ENCODE measurements at regions of chr11 and their contacts with region 1.

Region 1: DNA sequence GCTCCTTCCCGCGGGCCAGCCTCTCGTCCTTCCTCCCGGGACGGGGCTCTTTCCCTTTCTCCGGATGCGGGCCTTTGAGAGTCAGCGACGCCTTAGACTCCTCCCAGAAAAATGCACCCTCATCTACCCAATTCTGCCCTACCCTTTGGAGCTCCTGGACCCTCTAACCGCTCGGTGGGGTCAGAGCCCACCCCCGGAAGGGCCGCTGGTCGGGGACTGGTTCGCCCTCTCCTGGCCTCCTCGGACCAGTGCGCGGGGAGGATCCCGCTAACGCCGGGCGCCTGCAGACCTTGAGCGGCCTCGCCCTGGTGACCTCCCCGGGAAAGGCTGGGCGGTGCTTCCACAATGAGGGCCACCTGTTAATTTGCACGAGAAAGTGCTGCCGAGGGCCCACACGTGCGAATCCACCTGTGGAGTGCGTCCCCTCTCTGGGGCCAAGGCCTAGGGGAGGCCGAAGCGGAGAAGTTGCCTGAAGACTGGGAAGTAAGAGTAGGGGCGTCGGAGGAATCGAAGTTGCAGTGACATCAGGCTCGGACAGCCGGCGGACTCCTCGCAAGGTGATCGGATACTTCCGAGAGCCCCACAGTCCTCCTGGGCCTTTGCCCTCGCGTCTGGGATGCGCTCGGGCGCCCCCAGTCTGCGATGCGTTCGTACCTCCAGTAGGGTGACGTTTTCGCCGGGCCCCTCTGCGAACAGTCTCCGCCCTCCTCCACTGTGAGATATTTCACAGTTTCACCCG is 61.5 kb downstream of the ENDOD1 start:
- DNase-seq: peak; percentile 77
- ATAC-seq: peak; percentile 89
- H3K4me3 ChIP-seq: peak overlapping the region; percentile 80
- H3K27ac ChIP-seq: peak overlapping the region; percentile 56
- H3K4me1 ChIP-seq: peaks cover 2% of the 10 kb centered on the region; the same call in 1 of the 2 replicates
- H3K27me3 ChIP-seq: no peaks in the 10 kb centered on the region
- CTCF ChIP-seq: peak; percentile 79 to 97 (median 87)
- EP300 ChIP-seq: no peak
- POLR2A ChIP-seq: peak; percentile 75
- RAD21 ChIP-seq: peak; percentile 38; the same call in 1 of the 2 replicates

Region 2: GRCh38 chr11:94472916-94473799 is 678.0 kb before region 1 on chr11:
- CTCF ChIA-PET with region 1: no interaction called
- POLR2A ChIA-PET with region 1: no interaction called
- RAD21 ChIA-PET with region 1: no interaction called
- SMC1A ChIA-PET with region 1: no interaction called
- in situ Hi-C with region 1: no loop called
- intact Hi-C with region 1: no loop called
- DNase-seq: peak; percentile 88
- ATAC-seq: peak; percentile 82
- H3K4me3 ChIP-seq: peak overlapping the region; percentile 11; the same call in 1 of the 2 replicates
- H3K27ac ChIP-seq: peak overlapping the region; percentile 69
- H3K4me1 ChIP-seq: peaks cover 48% of the 10 kb centered on the region
- H3K27me3 ChIP-seq: no peaks in the 10 kb centered on the region
- CTCF ChIP-seq: no peak
- EP300 ChIP-seq: peak; percentile 96 to 97
- POLR2A ChIP-seq: no peak
- RAD21 ChIP-seq: no peak

Region 3: DNA sequence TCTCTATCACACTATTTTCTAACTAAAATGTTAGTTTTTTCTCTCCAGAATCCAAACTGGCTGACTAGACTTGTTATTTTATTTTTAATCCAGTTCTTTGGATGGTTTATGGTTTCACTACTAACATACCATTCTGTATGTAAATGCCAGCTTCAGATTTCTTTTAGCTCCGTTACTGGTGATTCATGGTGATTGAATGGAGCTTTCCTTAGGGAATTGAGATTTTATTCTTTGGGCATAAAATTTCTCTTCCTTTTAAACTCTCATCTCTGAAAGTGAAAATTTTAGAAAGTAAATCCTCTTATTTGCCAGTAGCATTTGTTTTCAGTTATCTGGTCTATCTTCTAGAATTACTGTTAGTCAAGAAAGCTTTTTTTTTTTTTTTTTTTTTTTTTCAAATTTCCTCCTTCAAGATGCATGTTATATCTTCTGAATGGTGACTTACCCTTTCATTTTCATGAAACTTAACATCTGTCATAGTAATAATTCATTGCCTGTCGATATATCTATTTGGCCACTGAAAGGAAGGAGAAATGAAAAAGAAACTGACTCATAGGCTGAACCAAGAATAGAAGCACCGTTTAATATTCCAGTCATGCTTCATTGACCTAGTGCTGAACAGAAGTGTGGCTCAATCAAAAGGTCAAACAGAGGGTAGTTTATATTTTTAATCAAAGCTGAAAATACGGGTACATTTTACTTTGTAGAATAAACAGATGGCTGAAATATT is 55.1 kb before region 1 on chr11:
- CTCF ChIA-PET with region 1: interaction called, 47 read pairs
- POLR2A ChIA-PET with region 1: interaction called, 4 read pairs
- RAD21 ChIA-PET with region 1: interaction called, 86 read pairs
- SMC1A ChIA-PET with region 1: interaction called, 9 read pairs
- in situ Hi-C with region 1: no loop called
- intact Hi-C with region 1: no loop called
- DNase-seq: peak; percentile 88
- ATAC-seq: peak; percentile 83
- H3K4me3 ChIP-seq: peak overlapping the region; percentile 50; the same call in 1 of the 2 replicates
- H3K27ac ChIP-seq: peak overlapping the region; percentile 57
- H3K4me1 ChIP-seq: peaks cover 45% of the 10 kb centered on the region
- H3K27me3 ChIP-seq: no peaks in the 10 kb centered on the region
- CTCF ChIP-seq: no peak
- EP300 ChIP-seq: peak; percentile 52 to 88; a peak in 3 of 4 replicates
- POLR2A ChIP-seq: no peak
- RAD21 ChIP-seq: no peak

Region 4: DNA sequence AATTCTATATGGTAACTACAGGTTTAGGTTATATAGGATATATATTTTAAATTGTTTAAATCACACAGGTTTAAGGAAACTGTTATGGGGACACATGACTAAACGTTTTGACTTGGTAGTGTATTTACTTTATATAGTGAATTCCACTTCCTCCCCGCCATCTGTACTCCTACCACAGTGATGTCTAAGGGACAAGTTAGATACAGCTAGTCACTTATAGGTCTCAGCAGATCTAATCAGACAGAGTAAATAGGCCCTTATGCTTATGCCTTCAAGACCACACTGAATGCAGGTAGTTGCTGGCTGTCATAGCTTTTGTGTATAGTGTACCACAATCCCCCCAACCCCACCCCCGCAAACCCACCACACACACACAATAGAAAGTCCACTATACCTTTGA is 71.7 kb after region 1 on chr11:
- CTCF ChIA-PET with region 1: interaction called, 18 read pairs
- POLR2A ChIA-PET with region 1: no interaction called
- RAD21 ChIA-PET with region 1: no interaction called
- SMC1A ChIA-PET with region 1: interaction called, 4 read pairs
- in situ Hi-C with region 1: no loop called
- intact Hi-C with region 1: no loop called
- DNase-seq: no peak
- ATAC-seq: peak; percentile 37; the same call in 2 of the 3 replicates
- H3K4me3 ChIP-seq: no peak overlapping the region
- H3K27ac ChIP-seq: no peak overlapping the region
- H3K4me1 ChIP-seq: no peaks in the 10 kb centered on the region
- H3K27me3 ChIP-seq: no peaks in the 10 kb centered on the region; a peak in 1 of 4 replicates
- CTCF ChIP-seq: no peak
- EP300 ChIP-seq: no peak
- POLR2A ChIP-seq: no peak
- RAD21 ChIP-seq: no peak

Region 5: DNA sequence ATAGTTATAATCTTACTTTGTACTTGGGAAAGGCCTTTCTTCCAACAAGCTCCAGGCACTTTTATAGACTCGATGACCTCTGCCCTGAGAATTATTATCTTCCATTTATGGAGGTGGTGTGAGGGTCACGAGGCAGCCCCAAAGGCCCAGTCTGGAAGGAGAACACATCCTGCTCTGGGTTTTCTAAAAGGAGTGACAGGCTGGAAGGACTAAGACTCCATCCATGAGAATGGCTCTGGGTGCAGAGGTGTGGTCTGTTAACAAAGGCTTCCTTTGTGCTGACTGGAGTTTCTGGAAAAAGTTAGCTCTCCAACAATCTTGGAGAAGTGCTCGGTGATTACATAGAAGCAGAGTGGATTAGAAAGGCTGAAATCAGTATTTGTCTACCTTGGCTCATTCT is 154.6 kb after region 1 on chr11:
- CTCF ChIA-PET with region 1: interaction called, 16 read pairs
- POLR2A ChIA-PET with region 1: interaction called, 3 read pairs
- RAD21 ChIA-PET with region 1: interaction called, 5 read pairs
- SMC1A ChIA-PET with region 1: interaction called, 6 read pairs
- in situ Hi-C with region 1: no loop called
- intact Hi-C with region 1: no loop called
- DNase-seq: no peak
- ATAC-seq: no peak
- H3K4me3 ChIP-seq: no peak overlapping the region
- H3K27ac ChIP-seq: no peak overlapping the region
- H3K4me1 ChIP-seq: no peaks in the 10 kb centered on the region
- H3K27me3 ChIP-seq: no peaks in the 10 kb centered on the region; a peak in 1 of 4 replicates
- CTCF ChIP-seq: no peak
- EP300 ChIP-seq: no peak
- POLR2A ChIP-seq: no peak
- RAD21 ChIP-seq: no peak

Region 6: DNA sequence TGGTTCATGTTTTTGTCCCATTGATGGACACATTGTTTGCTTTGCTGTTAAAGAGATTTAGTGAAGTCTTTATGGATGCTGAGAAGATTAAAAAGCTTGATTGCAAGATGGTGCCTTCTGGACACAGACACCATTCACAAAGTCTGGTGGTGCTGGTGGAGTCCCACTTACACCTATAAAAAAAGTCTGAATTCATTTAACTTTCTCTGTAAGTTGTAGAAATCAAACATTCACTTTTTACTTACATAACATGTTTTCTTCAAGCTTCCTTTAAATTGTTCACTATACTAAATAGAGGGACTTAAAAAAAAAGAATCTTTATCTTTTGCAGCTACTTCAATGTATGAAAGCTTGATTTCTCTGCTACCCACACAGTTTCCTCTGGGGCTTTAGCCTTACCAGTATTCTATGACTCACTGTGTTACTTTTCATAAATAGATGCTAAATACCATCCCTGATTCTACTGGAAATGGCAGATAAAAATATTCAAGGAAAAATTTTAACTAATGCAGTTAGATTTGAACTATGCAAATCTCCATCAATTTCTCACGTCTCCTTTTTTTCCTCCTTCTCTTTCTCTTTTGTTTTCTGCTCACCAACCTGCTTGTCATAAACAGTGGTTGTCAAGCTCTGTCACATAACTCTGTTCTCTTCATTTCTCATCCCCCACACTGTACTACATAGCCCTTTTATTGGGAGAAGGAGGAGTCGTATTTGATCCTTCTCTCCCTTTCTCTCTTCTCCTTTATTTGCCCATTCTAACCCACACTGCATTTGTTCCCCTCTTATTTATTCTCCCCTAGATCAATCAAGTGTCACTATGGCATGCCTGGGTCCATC is 548.7 kb after region 1 on chr11:
- CTCF ChIA-PET with region 1: interaction called, 590 read pairs
- POLR2A ChIA-PET with region 1: interaction called, 23 read pairs
- RAD21 ChIA-PET with region 1: interaction called, 425 read pairs
- SMC1A ChIA-PET with region 1: interaction called, 474 read pairs
- in situ Hi-C with region 1: loop called (anchors 5 kb)
- intact Hi-C with region 1: loop called (anchors 1 kb)
- DNase-seq: no peak
- ATAC-seq: peak; percentile 73
- H3K4me3 ChIP-seq: peak overlapping the region; percentile 30; the same call in 1 of the 2 replicates
- H3K27ac ChIP-seq: peak overlapping the region; percentile 15; the same call in 1 of the 2 replicates
- H3K4me1 ChIP-seq: peaks cover 18% of the 10 kb centered on the region
- H3K27me3 ChIP-seq: no peaks in the 10 kb centered on the region
- CTCF ChIP-seq: no peak
- EP300 ChIP-seq: 0 out of 4 replicates have a peak, but pooled peaks of 1 of the 2 experiments have one; percentile 13
- POLR2A ChIP-seq: no peak
- RAD21 ChIP-seq: no peak

Region 7: GRCh38 chr11:95790123-95790932 is 639.2 kb after region 1 on chr11 and contains the start of gene CEP57:
- CTCF ChIA-PET with region 1: interaction called, 15 read pairs
- POLR2A ChIA-PET with region 1: interaction called, 3 read pairs
- RAD21 ChIA-PET with region 1: interaction called, 20 read pairs
- SMC1A ChIA-PET with region 1: interaction called, 22 read pairs
- in situ Hi-C with region 1: no loop called
- intact Hi-C with region 1: no loop called
- DNase-seq: peak; percentile 92
- ATAC-seq: peak; percentile 73
- H3K4me3 ChIP-seq: peak within 1 kb of the TSS; percentile 87
- H3K27ac ChIP-seq: peak within 1 kb of the TSS; percentile 90
- H3K4me1 ChIP-seq: 0 out of 2 replicates have a peak, but pooled peaks cover 3% of the 10 kb centered on the region
- H3K27me3 ChIP-seq: no peaks in the 10 kb centered on the region
- CTCF ChIP-seq: no peak
- EP300 ChIP-seq: 0 out of 4 replicates have a peak, but pooled peaks of 1 of the 2 experiments have one; percentile 40
- POLR2A ChIP-seq: peak; percentile 77
- RAD21 ChIP-seq: no peak
- polyA plus RNA-seq, gene CEP57: 19.4 to 25.8 TPM